B cell (primary cell): ENCODE measurements at regions of chr6 and their contacts with region 1.

Region 1: DNA sequence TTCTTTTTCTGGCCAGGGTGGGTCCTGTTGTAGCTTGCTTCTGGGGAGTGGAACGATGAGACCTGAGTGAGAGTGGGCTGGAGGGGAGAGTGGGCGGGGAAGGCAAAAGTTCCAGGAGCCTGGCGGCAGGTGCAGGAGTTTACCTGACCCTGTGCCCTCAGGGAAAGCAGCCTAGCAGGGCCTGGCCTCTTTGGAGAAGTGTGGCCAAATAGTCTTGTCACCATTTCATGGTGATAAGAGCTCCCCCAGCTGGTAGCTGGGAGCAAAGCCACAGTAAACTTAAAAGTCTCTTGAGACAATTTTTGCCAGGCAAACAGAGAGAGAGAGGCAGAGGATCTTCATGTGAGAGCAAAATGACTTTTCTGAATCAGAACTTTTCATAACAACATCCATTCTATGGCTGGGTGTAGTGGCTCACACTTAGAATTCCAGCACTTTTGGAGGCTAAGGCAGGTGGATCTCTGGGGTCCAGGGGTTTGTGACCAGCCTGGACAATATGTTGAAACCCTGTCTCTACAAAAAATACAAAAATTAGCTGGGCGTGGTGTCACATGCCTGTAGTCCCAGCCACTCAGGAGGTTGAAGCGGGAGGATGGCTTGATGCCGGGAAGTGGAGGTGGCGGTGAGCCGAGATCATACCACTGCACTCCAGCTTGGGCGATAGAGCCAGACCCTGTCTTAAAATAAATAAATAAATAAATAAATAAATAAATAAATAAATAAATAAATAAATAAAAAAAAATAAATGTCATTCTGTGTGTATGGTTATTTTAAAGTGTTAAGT is 161.8 kb upstream of the SCGN start:
- DNase-seq: peak; percentile 80
- ATAC-seq: peak; percentile 82
- H3K4me3 ChIP-seq: no peak overlapping the region
- H3K4me3 Mint-ChIP-seq: no peak overlapping the region
- H3K27ac ChIP-seq: no peak overlapping the region
- H3K27ac Mint-ChIP-seq: no peak overlapping the region
- H3K4me1 ChIP-seq: peaks cover 0 to 3% of the 10 kb centered on the region in 2 donors
- H3K4me1 Mint-ChIP-seq: peaks cover 4% of the 10 kb centered on the region
- H3K27me3 ChIP-seq: no peaks in the 10 kb centered on the region
- H3K27me3 Mint-ChIP-seq: no peaks in the 10 kb centered on the region
- CTCF ChIP-seq: peak; percentile 94

Region 2: GRCh38 chr6:25263657-25264056 is 226.6 kb before region 1 on chr6:
- CTCF ChIA-PET with region 1: interaction called, 353 read pairs
- POLR2A ChIA-PET with region 1: interaction called, 4 read pairs
- intact Hi-C with region 1: loop called (anchors 1 kb)
- DNase-seq: no peak
- ATAC-seq: no peak
- H3K4me3 ChIP-seq: no peak overlapping the region
- H3K4me3 Mint-ChIP-seq: no peak overlapping the region
- H3K27ac ChIP-seq: no peak overlapping the region
- H3K27ac Mint-ChIP-seq: no peak overlapping the region
- H3K4me1 ChIP-seq: no peaks in the 10 kb centered on the region
- H3K4me1 Mint-ChIP-seq: peaks cover 2% of the 10 kb centered on the region
- H3K27me3 ChIP-seq: no peaks in the 10 kb centered on the region
- H3K27me3 Mint-ChIP-seq: peaks cover 3% of the 10 kb centered on the region
- CTCF ChIP-seq: no peak

Region 3: GRCh38 chr6:25278914-25279747 is 211.1 kb before region 1 on chr6 and contains the start of gene CARMIL1:
- CTCF ChIA-PET with region 1: interaction called, 212 read pairs
- POLR2A ChIA-PET with region 1: interaction called, 9 read pairs
- intact Hi-C with region 1: loop called (anchors 1 kb)
- DNase-seq: peak; percentile 79
- ATAC-seq: peak; percentile 82
- H3K4me3 ChIP-seq: peak within 1 kb of the TSS; percentile 61 to 86 (median 83)
- H3K4me3 Mint-ChIP-seq: peak within 1 kb of the TSS; percentile 96
- H3K27ac ChIP-seq: peak within 1 kb of the TSS; percentile 39 to 66
- H3K27ac Mint-ChIP-seq: peak within 1 kb of the TSS; percentile 89
- H3K4me1 ChIP-seq: peaks cover 23 to 30% of the 10 kb centered on the region in 2 donors
- H3K4me1 Mint-ChIP-seq: peaks cover 34% of the 10 kb centered on the region
- H3K27me3 ChIP-seq: no peaks in the 10 kb centered on the region
- H3K27me3 Mint-ChIP-seq: peaks cover 5% of the 10 kb centered on the region
- CTCF ChIP-seq: peak; percentile 53
- total RNA-seq, gene CARMIL1: 7.5 and 9.0 TPM in 2 replicates

Region 4: GRCh38 chr6:25369433-25370181 is 120.6 kb before region 1 on chr6:
- CTCF ChIA-PET with region 1: interaction called, 23 read pairs
- POLR2A ChIA-PET with region 1: no interaction called
- intact Hi-C with region 1: no loop called
- DNase-seq: no peak
- ATAC-seq: no peak
- H3K4me3 ChIP-seq: no peak overlapping the region
- H3K4me3 Mint-ChIP-seq: peak overlapping the region; percentile 42
- H3K27ac ChIP-seq: peak overlapping the region in 1 of 2 donors; percentile 22
- H3K27ac Mint-ChIP-seq: peak overlapping the region; percentile 43
- H3K4me1 ChIP-seq: peaks cover 19 to 30% of the 10 kb centered on the region in 2 donors
- H3K4me1 Mint-ChIP-seq: peaks cover 62% of the 10 kb centered on the region
- H3K27me3 ChIP-seq: no peaks in the 10 kb centered on the region
- H3K27me3 Mint-ChIP-seq: no peaks in the 10 kb centered on the region
- CTCF ChIP-seq: no peak

Region 5: DNA sequence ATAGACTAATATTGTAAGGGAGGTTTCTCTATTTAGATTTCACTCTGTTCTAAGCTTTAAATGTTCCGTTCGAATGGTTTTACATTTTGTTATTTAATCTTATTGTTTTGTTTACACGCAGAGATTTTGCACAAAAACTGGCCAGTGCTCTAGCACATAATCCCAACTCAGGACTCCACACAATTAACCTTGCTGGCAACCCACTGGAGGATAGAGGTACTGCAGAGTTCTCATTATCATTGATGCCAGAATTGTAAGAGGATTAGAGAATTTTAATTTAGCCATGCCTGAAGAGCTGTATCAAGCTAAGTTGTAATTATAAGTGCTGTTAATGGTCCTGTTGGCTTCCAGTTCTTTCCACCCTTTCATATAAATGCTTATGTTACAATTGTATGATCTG is 17.9 kb before region 1 on chr6:
- CTCF ChIA-PET with region 1: interaction called, 16 read pairs
- POLR2A ChIA-PET with region 1: no interaction called
- intact Hi-C with region 1: no loop called
- DNase-seq: no peak
- ATAC-seq: no peak
- H3K4me3 ChIP-seq: no peak overlapping the region
- H3K4me3 Mint-ChIP-seq: no peak overlapping the region
- H3K27ac ChIP-seq: no peak overlapping the region
- H3K27ac Mint-ChIP-seq: no peak overlapping the region
- H3K4me1 ChIP-seq: peaks cover 0 to 5% of the 10 kb centered on the region in 2 donors
- H3K4me1 Mint-ChIP-seq: peaks cover 12% of the 10 kb centered on the region
- H3K27me3 ChIP-seq: no peaks in the 10 kb centered on the region
- H3K27me3 Mint-ChIP-seq: no peaks in the 10 kb centered on the region
- CTCF ChIP-seq: no peak

Region 6: GRCh38 chr6:25556516-25556915 is 66.3 kb after region 1 on chr6:
- CTCF ChIA-PET with region 1: interaction called, 20 read pairs
- POLR2A ChIA-PET with region 1: no interaction called
- intact Hi-C with region 1: loop called (anchors 2 kb)
- DNase-seq: peak; percentile 75
- ATAC-seq: no peak
- H3K4me3 ChIP-seq: no peak overlapping the region
- H3K4me3 Mint-ChIP-seq: no peak overlapping the region
- H3K27ac ChIP-seq: no peak overlapping the region
- H3K27ac Mint-ChIP-seq: no peak overlapping the region
- H3K4me1 ChIP-seq: peaks cover 4 to 9% of the 10 kb centered on the region in 2 donors
- H3K4me1 Mint-ChIP-seq: peaks cover 11% of the 10 kb centered on the region
- H3K27me3 ChIP-seq: no peaks in the 10 kb centered on the region
- H3K27me3 Mint-ChIP-seq: peaks cover 2% of the 10 kb centered on the region
- CTCF ChIP-seq: peak; percentile 95

Region 7: DNA sequence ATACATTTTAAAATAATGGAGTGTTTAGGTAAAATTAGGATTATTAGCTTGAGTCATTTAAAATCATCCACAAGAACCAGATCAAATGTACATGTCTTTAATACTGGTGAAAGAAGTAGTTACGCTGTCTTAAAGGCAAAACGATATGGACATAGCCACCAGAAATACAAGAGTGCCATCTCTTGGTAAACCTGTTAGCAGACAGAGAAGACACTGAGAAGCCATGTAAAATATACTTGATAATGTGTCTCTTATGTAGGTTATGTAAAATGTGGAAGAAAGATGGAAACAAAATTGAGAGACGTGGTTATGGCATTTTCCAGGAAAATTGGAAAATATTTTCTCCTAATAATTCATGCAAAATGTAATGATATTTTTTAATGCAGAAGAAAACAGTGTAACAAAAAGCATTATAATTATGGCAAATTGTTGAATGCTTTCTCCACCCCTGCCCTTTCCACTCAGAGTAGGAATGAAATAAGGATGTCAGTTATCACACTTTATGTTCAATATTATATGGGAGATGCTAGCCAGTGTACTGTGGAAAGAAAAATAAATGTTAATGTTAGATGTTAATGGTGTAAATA is 452.4 kb after region 1 on chr6:
- CTCF ChIA-PET with region 1: interaction called, 6 read pairs
- POLR2A ChIA-PET with region 1: no interaction called
- intact Hi-C with region 1: loop called (anchors 5 kb)
- DNase-seq: peak; percentile 65
- ATAC-seq: peak; percentile 47
- H3K4me3 ChIP-seq: no peak overlapping the region
- H3K4me3 Mint-ChIP-seq: no peak overlapping the region
- H3K27ac ChIP-seq: no peak overlapping the region
- H3K27ac Mint-ChIP-seq: no peak overlapping the region
- H3K4me1 ChIP-seq: no peaks in the 10 kb centered on the region
- H3K4me1 Mint-ChIP-seq: peaks cover 10% of the 10 kb centered on the region
- H3K27me3 ChIP-seq: no peaks in the 10 kb centered on the region
- H3K27me3 Mint-ChIP-seq: peaks cover 4% of the 10 kb centered on the region
- CTCF ChIP-seq: peak; percentile 70

Region 8: DNA sequence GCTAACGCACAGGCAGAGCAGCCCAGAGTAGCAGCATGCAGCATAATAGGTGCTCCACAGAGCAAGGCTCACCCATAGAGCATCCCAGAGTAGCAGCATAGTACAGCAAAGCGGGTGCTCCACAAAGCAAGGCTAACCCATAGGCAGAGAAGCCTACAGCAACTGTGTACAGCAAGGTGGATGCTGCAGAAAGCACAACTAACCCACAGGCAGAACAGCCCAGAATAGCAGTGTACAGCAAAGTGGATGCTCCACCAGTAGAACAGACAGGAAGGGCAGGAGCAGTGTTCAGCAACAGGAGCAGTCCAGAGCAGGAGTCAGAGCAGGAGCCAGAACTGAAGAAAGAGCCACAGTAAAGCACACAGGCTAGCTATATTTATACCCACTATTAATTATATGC is 1624.6 kb after region 1 on chr6:
- CTCF ChIA-PET with region 1: no interaction called
- POLR2A ChIA-PET with region 1: no interaction called
- intact Hi-C with region 1: no loop called
- DNase-seq: no peak
- ATAC-seq: no peak
- H3K4me3 ChIP-seq: no peak overlapping the region
- H3K4me3 Mint-ChIP-seq: no peak overlapping the region
- H3K27ac ChIP-seq: no peak overlapping the region
- H3K27ac Mint-ChIP-seq: no peak overlapping the region
- H3K4me1 ChIP-seq: no peaks in the 10 kb centered on the region
- H3K4me1 Mint-ChIP-seq: no peaks in the 10 kb centered on the region
- H3K27me3 ChIP-seq: peaks cover 0 to 8% (median 0%) of the 10 kb centered on the region in 4 experiments
- H3K27me3 Mint-ChIP-seq: peaks cover 25% of the 10 kb centered on the region
- CTCF ChIP-seq: no peak